HEK293T (cell line): ENCODE measurements at regions of chr20 and their contacts with region 1.

Region 1: DNA sequence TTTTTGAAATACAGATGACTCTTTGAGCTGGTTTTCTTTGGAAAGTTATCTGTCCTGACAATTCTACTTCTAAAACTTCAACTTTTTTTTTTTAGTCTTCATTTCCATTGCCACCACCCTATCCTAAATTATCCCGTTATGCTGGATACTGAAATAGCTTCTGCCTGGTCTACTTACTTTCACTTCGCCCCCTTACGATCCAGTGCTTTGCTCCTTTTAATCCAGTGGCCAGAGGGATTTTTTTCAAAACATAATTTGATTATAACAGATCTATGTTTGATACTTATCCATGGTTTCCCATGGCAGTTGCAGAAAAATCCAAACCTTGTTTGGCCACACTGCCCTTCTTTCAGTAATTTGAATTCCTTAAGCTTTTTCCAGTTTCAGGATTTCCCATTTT is 27.4 kb downstream of the ASXL1 start:
- DNase-seq: no peak

Region 2: GRCh38 chr20:32325706-32326503 is 59.6 kb before region 1 on chr20:
- CTCF ChIA-PET with region 1: no interaction called
- POLR2A ChIA-PET with region 1: no interaction called
- DNase-seq: no peak

Region 3: GRCh38 chr20:32343438-32343837 is 42.1 kb before region 1 on chr20:
- CTCF ChIA-PET with region 1: no interaction called
- POLR2A ChIA-PET with region 1: no interaction called
- DNase-seq: no peak

Region 4: DNA sequence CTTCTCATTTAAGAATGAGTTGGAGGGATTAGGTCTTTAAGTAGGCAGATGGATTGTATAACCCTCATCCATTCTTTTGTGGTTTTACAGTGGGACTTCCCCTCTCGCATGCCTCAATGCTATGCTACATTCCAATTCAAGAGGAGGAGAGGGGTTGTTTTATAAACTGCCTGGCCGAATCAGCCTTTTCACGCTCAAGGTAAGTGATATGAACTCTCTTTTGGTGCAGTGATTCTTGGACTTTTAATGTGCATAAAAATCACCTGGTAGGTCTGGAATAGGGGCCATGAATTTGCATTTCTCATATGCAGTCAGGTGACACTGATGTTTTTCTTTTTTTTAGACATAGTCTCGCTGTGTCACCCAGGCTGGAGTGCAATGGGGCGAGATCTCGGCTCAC is 16.6 kb before region 1 on chr20:
- CTCF ChIA-PET with region 1: interaction called, 11 read pairs
- POLR2A ChIA-PET with region 1: interaction called, 3 read pairs
- DNase-seq: no peak

Region 5: DNA sequence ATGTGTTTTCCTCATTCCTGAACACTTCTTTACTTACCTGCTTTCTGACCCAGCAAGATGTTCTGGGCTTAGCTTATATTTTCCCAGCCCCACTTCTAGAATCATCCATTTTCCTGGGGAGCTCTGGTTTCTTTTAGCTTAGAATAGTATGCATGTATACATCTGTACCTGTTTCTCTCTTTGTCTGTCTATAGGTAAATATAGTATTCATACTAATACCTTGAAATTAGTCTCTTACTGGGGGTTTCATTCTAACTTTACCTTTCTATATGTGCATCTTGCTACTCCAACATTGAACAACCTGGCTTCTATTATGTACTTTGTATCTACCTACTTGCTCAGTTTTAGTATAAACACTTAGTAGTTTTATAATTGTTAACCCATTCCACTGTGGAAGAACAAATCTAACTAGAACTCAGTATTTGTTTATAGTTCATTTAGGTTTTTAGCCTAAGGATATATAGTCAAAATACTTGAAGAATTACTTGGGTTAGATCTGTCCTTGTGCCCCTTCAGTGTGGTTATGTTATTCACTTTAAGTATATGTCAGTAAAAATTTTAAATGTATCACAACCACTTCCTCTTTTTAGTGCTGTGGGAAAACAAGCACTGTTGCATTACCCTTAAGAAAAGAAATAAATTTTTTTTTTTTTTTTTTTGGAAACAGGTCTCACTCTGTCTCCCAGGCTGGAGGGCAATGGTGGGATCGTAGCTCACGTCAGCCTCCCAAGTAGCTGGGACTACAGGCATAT is 26.6 kb after region 1 on chr20:
- CTCF ChIA-PET with region 1: no interaction called
- POLR2A ChIA-PET with region 1: no interaction called
- DNase-seq: no peak